ENCODE measurements at regions of chr12 and their contacts with region 1.

Region 1: DNA sequence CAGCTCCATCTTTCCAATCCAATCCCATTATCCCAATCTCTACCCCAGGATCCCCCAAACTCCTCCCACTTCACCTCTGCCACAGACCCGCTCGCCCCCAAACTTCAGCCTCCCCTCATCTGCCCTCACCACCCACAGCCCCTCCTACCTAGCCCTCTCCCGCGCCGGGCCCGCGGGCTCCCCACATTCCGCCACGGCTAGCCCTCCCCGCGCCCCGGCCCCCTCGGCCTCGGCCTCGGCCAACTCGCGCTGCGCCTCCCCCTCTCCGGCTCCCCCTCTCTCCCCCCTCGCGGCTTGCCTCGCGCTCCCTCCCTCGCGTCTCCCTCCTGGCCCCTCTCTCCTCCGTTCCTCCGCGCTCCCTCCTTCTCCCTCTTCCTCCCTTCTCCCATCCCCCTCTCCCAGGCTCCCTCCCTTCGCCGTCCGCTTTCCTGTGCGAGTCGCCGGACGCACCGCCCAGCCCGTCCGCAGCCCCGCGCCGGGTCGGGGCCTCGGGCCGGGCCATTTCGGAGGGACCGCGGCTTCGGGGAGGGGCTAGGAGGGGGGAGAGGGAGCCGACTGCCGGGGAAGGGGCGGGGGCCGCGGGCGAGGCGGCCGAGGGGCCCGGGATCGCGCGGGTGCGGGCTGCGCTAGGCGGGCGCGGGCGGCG is at the start of gene ATN1:
- DNase-seq: peak; percentile 84 to 94 (median 89)
- ATAC-seq: peak; percentile 39
- H3K4me3 ChIP-seq: peak within 1 kb of the TSS; percentile 68 to 70
- H3K27ac ChIP-seq: peak within 1 kb of the TSS; percentile 85 to 95
- H3K4me1 ChIP-seq: peaks cover 47 to 81% of the 10 kb centered on the region in 2 donors
- H3K27me3 ChIP-seq: peaks cover 0 to 28% of the 10 kb centered on the region in 2 donors
- CTCF ChIP-seq: no peak
- polyA plus RNA-seq, gene ATN1: 94.9 to 134 (median 115) TPM

Region 2: GRCh38 chr12:7039403-7039802 is 111.9 kb after region 1 on chr12:
- intact Hi-C with region 1: no loop called
- DNase-seq: no peak
- ATAC-seq: no peak
- H3K4me3 ChIP-seq: no peak overlapping the region
- H3K27ac ChIP-seq: no peak overlapping the region
- H3K4me1 ChIP-seq: no peaks in the 10 kb centered on the region
- H3K27me3 ChIP-seq: no peaks in the 10 kb centered on the region
- CTCF ChIP-seq: no peak

Region 3: DNA sequence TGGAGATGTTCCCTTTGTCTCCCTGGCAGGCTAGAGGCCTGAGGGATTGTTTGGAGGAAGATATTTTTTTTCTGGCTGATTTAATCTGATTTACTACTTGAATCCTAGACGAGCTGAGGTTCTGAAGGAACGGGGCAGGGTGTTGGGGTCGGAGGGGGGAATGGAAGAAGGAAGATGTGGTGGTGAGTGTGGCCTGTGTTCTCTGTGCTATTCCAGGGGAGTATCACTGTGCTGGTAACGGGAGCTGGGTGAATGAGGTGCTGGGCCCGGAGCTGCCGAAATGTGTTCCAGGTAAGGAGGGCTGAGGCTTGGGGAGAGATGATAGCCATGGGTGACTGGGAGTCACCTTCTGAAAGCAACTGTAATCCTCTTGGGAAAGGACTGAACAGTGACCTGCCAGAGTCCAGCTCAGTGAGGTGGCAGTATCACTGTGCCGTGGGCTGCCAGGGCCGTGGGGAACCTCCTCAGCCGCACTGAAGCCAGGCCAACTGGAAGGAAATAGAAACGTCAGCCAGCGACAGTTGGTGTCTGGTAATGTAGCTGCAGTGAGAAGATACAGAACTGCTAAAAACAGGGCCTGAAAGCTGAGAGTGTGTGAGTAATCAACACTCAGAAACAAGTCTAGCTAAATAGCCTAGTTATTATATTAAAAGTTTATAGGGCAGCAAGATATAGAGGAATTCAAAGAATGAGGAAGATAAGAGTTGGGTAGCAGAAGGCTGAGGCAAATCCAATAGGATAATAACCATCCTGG is 140.9 kb after region 1 on chr12:
- intact Hi-C with region 1: no loop called
- DNase-seq: no peak
- ATAC-seq: peak; percentile 70
- H3K4me3 ChIP-seq: no peak overlapping the region
- H3K27ac ChIP-seq: no peak overlapping the region
- H3K4me1 ChIP-seq: peaks cover 0 to 4% of the 10 kb centered on the region in 2 donors
- H3K27me3 ChIP-seq: no peaks in the 10 kb centered on the region
- CTCF ChIP-seq: no peak

Region 4: GRCh38 chr12:7092229-7092985 is 164.9 kb after region 1 on chr12 and contains the start of gene C1R:
- intact Hi-C with region 1: loop called in 1 of 2 experiments (anchors 10 kb)
- DNase-seq: peak; percentile 77 to 89 (median 84)
- ATAC-seq: peak; percentile 79
- H3K4me3 ChIP-seq: peak within 1 kb of the TSS; percentile 28 to 50
- H3K27ac ChIP-seq: peak within 1 kb of the TSS; percentile 47 to 77
- H3K4me1 ChIP-seq: peaks cover 0 to 20% of the 10 kb centered on the region in 2 donors
- H3K27me3 ChIP-seq: no peaks in the 10 kb centered on the region
- CTCF ChIP-seq: peak; percentile 81 to 92
- polyA plus RNA-seq, gene C1R: 69.3 to 98.5 (median 80.1) TPM